Activated T-helper 1 cell treated with anti-CD3 and anti-CD28 coated beads, Interleukin-12 subunit alpha, Interleukin-12 subunit beta, Interleukin-2, Interleukin-4 antibody, amounts not matched to agents 30 ng/mL and 10 ng/mL and 1 ng/mL, durations not matched to agents 14 hours and 24 hours and 36 hours (primary cell): ENCODE measurements at regions of chr1 and their contacts with region 1.

Region 1: GRCh38 chr1:178542560-178543356 is 29.8 kb downstream of the TEX35 start:
- DNase-seq: peak; percentile 81
- H3K4me3 Mint-ChIP-seq: peak overlapping the region; percentile 88
- H3K27ac Mint-ChIP-seq: peak overlapping the region; percentile 80
- H3K4me1 Mint-ChIP-seq: no peaks in the 10 kb centered on the region
- H3K27me3 Mint-ChIP-seq: no peaks in the 10 kb centered on the region

Region 2: GRCh38 chr1:178532392-178532791 is 10.4 kb before region 1 on chr1:
- intact Hi-C with region 1: loop called (anchors 1 kb)
- DNase-seq: peak; percentile 50
- H3K4me3 Mint-ChIP-seq: no peak overlapping the region
- H3K27ac Mint-ChIP-seq: no peak overlapping the region
- H3K4me1 Mint-ChIP-seq: peaks cover 7% of the 10 kb centered on the region
- H3K27me3 Mint-ChIP-seq: peaks cover 3% of the 10 kb centered on the region

Region 3: GRCh38 chr1:178725603-178726517 is 183.1 kb after region 1 on chr1:
- intact Hi-C with region 1: loop called (anchors 1 kb)
- DNase-seq: peak; percentile 35
- H3K4me3 Mint-ChIP-seq: peak overlapping the region; percentile 84
- H3K27ac Mint-ChIP-seq: peak overlapping the region; percentile 43
- H3K4me1 Mint-ChIP-seq: peaks cover 10% of the 10 kb centered on the region
- H3K27me3 Mint-ChIP-seq: peaks cover 31% of the 10 kb centered on the region

Region 4: GRCh38 chr1:179002552-179003345 is 460.0 kb after region 1 on chr1:
- intact Hi-C with region 1: loop called (anchors 2 kb)
- DNase-seq: peak; percentile 27
- H3K4me3 Mint-ChIP-seq: no peak overlapping the region
- H3K27ac Mint-ChIP-seq: no peak overlapping the region
- H3K4me1 Mint-ChIP-seq: peaks cover 13% of the 10 kb centered on the region
- H3K27me3 Mint-ChIP-seq: peaks cover 5% of the 10 kb centered on the region

Region 5: DNA sequence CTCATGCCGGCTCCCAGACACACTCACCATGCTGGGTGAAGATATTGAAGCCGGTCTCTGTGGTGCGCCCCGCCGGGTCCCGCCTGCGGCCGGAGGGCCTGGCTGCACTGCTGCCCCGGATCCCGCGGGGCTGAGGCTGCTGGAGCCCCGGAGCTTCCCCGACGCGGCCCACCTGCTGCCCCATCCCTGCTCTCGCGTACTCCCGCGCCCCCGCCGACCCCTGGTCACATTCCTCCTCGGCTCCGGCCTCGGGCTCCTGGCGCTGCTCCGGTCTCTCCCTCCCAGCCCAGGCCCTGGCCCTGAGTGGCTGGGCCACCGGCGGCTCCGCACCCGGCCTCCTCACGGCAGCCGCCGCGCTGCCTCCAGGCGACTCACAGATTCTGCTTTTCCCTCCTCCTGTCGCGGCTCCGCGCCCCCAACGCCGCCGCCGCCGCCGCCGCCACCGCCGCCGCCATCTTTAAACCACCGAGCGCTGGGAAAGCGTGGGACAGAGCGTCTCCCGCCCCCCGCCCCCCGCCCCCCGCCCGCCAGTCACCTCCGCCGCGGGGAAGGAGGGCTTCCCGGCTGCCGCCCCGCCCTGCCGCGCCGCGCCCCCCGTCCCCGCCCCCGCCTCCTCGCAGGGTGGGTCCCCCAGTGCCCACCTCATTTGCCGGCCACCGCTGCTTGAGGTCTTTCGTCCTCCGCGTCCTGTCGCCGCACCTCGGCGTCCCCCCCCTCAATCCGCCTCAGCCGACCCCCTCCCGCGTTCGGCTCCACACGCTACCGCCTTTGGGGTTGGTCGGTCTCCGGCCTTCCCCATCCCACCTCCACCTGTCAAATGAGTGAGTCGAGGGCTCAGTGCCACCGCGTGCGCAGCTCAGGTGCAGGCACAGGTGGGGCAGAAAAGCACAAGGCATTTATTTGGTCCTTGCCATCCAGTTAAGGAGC is 686.7 kb after region 1 on chr1 and contains the start of gene ABL2:
- intact Hi-C with region 1: loop called (anchors 5 kb)
- DNase-seq: peak; percentile 47
- H3K4me3 Mint-ChIP-seq: peak within 1 kb of the TSS; percentile 88
- H3K27ac Mint-ChIP-seq: peak within 1 kb of the TSS; percentile 80
- H3K4me1 Mint-ChIP-seq: peaks cover 31% of the 10 kb centered on the region
- H3K27me3 Mint-ChIP-seq: no peaks in the 10 kb centered on the region
- total RNA-seq, gene ABL2: 9.5 and 11.4 TPM in 2 replicates

Region 6: GRCh38 chr1:180062452-180062975 is 1519.8 kb after region 1 on chr1:
- intact Hi-C with region 1: no loop called
- DNase-seq: no peak
- H3K4me3 Mint-ChIP-seq: no peak overlapping the region
- H3K27ac Mint-ChIP-seq: no peak overlapping the region
- H3K4me1 Mint-ChIP-seq: peaks cover 5% of the 10 kb centered on the region
- H3K27me3 Mint-ChIP-seq: peaks cover 1% of the 10 kb centered on the region